ENCODE measurements at regions of chr17 and their contacts with region 1.

Region 1: DNA sequence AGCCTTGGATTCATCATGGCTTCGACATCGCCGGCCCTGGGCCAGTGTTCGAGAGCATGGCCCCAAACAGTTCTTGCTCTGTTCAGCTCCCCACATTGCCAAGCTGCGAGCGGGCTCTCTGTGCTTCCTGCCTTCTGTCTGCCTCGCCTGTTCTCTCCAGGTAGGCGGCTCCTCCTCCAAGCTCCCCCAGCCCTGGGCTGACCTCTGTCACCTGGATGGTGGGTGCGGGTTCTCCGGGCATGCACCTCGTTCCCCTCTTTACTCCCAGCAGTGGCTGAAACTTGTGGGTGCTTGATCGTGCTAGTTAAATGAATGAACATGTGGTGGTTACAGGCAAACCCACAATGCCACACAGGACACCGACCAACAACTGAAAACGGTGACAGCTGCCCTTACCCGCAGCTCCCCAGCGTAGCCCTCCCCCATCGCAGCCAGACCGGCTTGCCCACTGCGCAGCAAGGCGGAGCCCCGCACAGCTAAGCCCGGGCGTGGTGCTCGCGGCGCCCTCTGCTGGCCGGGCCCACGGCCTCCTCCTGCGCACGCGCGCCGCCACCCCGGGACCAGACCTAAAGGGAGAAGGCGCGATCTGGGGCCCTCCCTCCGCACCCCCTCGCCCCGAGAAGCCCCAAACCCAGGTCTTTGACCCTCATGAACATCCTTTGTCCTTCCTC is 23.0 kb upstream of the EIF1 start:
- DNase-seq: peak; percentile 88
- H3K4me3 Mint-ChIP-seq: peak overlapping the region; percentile 81
- H3K27ac Mint-ChIP-seq: peak overlapping the region; percentile 98
- H3K4me1 Mint-ChIP-seq: peaks cover 60% of the 10 kb centered on the region
- H3K27me3 Mint-ChIP-seq: peaks cover 8% of the 10 kb centered on the region

Region 2: GRCh38 chr17:40622509-40622928 is 1043.2 kb before region 1 on chr17:
- intact Hi-C with region 1: loop called (anchors 10 kb)
- DNase-seq: no peak
- H3K4me3 Mint-ChIP-seq: peak overlapping the region; percentile 35
- H3K27ac Mint-ChIP-seq: peak overlapping the region; percentile 71
- H3K4me1 Mint-ChIP-seq: peaks cover 70% of the 10 kb centered on the region
- H3K27me3 Mint-ChIP-seq: no peaks in the 10 kb centered on the region

Region 3: DNA sequence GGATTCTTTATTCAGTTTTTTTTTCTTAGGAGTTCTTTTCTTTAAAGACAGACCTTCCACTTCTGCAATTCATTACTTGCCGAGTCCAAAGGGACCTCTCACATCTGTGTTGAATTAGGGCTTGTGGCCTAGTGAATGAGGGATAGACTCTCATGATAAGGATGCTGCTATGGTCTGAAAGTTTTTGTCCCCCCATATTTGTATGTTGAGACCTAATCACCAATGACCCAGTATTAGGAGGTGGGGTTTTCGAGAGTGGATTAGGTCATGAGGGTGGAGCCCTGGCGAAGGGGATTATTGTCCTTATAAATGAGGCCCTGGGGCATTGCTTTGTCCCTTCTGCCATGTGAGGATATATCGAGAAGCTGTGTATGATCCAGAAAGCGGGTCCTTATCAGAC is 808.2 kb before region 1 on chr17:
- intact Hi-C with region 1: loop called (anchors 1 kb)
- DNase-seq: no peak
- H3K4me3 Mint-ChIP-seq: no peak overlapping the region
- H3K27ac Mint-ChIP-seq: no peak overlapping the region
- H3K4me1 Mint-ChIP-seq: no peaks in the 10 kb centered on the region
- H3K27me3 Mint-ChIP-seq: peaks cover 20% of the 10 kb centered on the region

Region 4: DNA sequence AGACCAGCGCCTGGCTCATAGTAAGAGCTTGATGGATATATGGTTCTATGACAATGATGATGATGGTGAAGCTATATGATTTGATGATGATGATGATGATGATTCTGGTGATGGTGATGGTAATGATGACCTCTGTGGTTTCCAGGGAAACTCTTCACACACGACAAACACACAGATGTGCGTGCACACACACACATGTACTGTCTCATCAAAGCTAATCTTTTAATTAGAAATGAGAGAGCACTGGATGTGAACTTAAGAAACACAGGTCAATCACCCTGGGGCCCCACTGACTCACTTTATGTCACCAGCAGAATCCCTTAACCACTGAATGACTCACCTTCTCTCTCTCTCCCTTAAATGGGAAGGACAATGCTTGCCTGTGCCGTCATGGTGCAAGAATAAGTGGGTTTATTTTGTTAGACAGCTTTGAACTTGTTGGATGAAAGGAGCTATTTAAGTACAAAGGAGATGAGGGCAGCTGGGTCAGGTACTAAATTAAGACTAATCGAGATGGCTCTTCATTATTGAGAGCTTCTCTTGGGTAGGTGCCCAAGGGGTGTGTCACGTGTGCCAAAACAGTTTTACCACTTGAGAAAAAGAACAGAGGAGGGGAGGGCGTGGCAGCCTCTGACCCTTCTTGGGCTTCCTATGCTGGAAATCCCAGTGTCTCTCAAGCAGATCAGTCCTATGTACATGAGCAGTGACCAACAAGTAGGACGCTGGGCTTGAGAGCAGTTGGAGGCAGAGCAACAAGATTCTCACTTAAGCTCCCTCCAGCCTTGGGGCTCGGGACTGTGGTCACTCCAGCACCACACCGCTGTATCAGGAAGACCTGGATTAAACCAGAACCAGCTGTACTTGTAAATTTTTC is 261.7 kb before region 1 on chr17:
- intact Hi-C with region 1: loop called (anchors 10 kb)
- DNase-seq: peak; percentile 3
- H3K4me3 Mint-ChIP-seq: peak overlapping the region; percentile 27
- H3K27ac Mint-ChIP-seq: peak overlapping the region; percentile 77
- H3K4me1 Mint-ChIP-seq: peaks cover 30% of the 10 kb centered on the region
- H3K27me3 Mint-ChIP-seq: no peaks in the 10 kb centered on the region

Region 5: GRCh38 chr17:41579484-41580243 is 86.0 kb before region 1 on chr17:
- intact Hi-C with region 1: loop called (anchors 1 kb)
- DNase-seq: peak; percentile 62
- H3K4me3 Mint-ChIP-seq: no peak overlapping the region
- H3K27ac Mint-ChIP-seq: no peak overlapping the region
- H3K4me1 Mint-ChIP-seq: no peaks in the 10 kb centered on the region
- H3K27me3 Mint-ChIP-seq: peaks cover 23% of the 10 kb centered on the region

Region 6: GRCh38 chr17:41688699-41689496 is 23.2 kb after region 1 on chr17 and contains the start of gene EIF1:
- intact Hi-C with region 1: loop called (anchors 1 kb)
- DNase-seq: peak; percentile 100
- H3K4me3 Mint-ChIP-seq: peak within 1 kb of the TSS; percentile 96
- H3K27ac Mint-ChIP-seq: peak within 1 kb of the TSS; percentile 96
- H3K4me1 Mint-ChIP-seq: peaks cover 29% of the 10 kb centered on the region
- H3K27me3 Mint-ChIP-seq: peaks cover 3% of the 10 kb centered on the region
- total RNA-seq, gene EIF1: 876 and 893 TPM in 2 replicates

Region 7: GRCh38 chr17:42019509-42020404 is 354.1 kb after region 1 on chr17 and contains the start of gene NKIRAS2:
- intact Hi-C with region 1: no loop called
- DNase-seq: peak; percentile 93
- H3K4me3 Mint-ChIP-seq: peak within 1 kb of the TSS; percentile 100
- H3K27ac Mint-ChIP-seq: peak within 1 kb of the TSS; percentile 81
- H3K4me1 Mint-ChIP-seq: peaks cover 53% of the 10 kb centered on the region
- H3K27me3 Mint-ChIP-seq: no peaks in the 10 kb centered on the region
- total RNA-seq, gene NKIRAS2: 32.6 and 36.3 TPM in 2 replicates